IMR-90 (cell line): ENCODE measurements at regions of chr9 and their contacts with region 1.

Region 1: GRCh38 chr9:115008536-115009270 is 78.3 kb upstream of the TNFSF8 start:
- DNase-seq: peak; percentile 94
- ATAC-seq: peak; percentile 96
- H3K4me3 ChIP-seq: no peak overlapping the region
- H3K27ac ChIP-seq: no peak overlapping the region
- H3K4me1 ChIP-seq: peaks cover 2% of the 10 kb centered on the region
- H3K27me3 ChIP-seq: peaks cover 7% of the 10 kb centered on the region
- CTCF ChIP-seq: no peak
- POLR2A ChIP-seq: no peak
- RAD21 ChIP-seq: no peak

Region 2: GRCh38 chr9:114681594-114682332 is 326.9 kb before region 1 on chr9 and contains the start of gene TEX48:
- CTCF ChIA-PET with region 1: interaction called, 11 read pairs
- POLR2A ChIA-PET with region 1: no interaction called
- dilution Hi-C with region 1: no loop called
- in situ Hi-C with region 1: no loop called
- intact Hi-C with region 1: no loop called
- DNase-seq: peak; percentile 74
- ATAC-seq: peak; percentile 58
- H3K4me3 ChIP-seq: no peak within 1 kb of the TSS
- H3K27ac ChIP-seq: no peak within 1 kb of the TSS
- H3K4me1 ChIP-seq: peaks cover 9% of the 10 kb centered on the region
- H3K27me3 ChIP-seq: no peaks in the 10 kb centered on the region
- CTCF ChIP-seq: peak; percentile 70
- POLR2A ChIP-seq: no peak
- RAD21 ChIP-seq: peak; percentile 75
- total RNA-seq, gene TEX48: not detected in 2 replicates

Region 3: GRCh38 chr9:114938687-114939575 is 69.8 kb before region 1 on chr9:
- CTCF ChIA-PET with region 1: no interaction called
- POLR2A ChIA-PET with region 1: no interaction called
- dilution Hi-C with region 1: no loop called
- in situ Hi-C with region 1: no loop called
- intact Hi-C with region 1: loop called (anchors 5 kb)
- DNase-seq: no peak
- ATAC-seq: no peak
- H3K4me3 ChIP-seq: no peak overlapping the region
- H3K27ac ChIP-seq: no peak overlapping the region
- H3K4me1 ChIP-seq: no peaks in the 10 kb centered on the region
- H3K27me3 ChIP-seq: peaks cover 25% of the 10 kb centered on the region
- CTCF ChIP-seq: no peak
- POLR2A ChIP-seq: no peak
- RAD21 ChIP-seq: no peak

Region 4: GRCh38 chr9:115672477-115673316 is 664.0 kb after region 1 on chr9:
- CTCF ChIA-PET with region 1: no interaction called
- POLR2A ChIA-PET with region 1: no interaction called
- dilution Hi-C with region 1: no loop called
- in situ Hi-C with region 1: no loop called
- intact Hi-C with region 1: no loop called
- DNase-seq: peak; percentile 99
- ATAC-seq: peak; percentile 74
- H3K4me3 ChIP-seq: peak overlapping the region; percentile 10; the same call in 1 of the 2 replicates
- H3K27ac ChIP-seq: peak overlapping the region; percentile 99
- H3K4me1 ChIP-seq: peaks cover 35% of the 10 kb centered on the region
- H3K27me3 ChIP-seq: no peaks in the 10 kb centered on the region
- CTCF ChIP-seq: no peak
- POLR2A ChIP-seq: peak; percentile 73
- RAD21 ChIP-seq: peak; percentile 32; the same call in 1 of the 2 replicates